B cell (primary cell): ENCODE measurements at regions of chr10 and their contacts with region 1.

Region 1: GRCh38 chr10:35336084-35336831 is at the start of gene CCNY:
- DNase-seq: peak; percentile 83
- ATAC-seq: peak; percentile 87
- H3K4me3 ChIP-seq: peak within 1 kb of the TSS; percentile 50 to 90 (median 74)
- H3K4me3 Mint-ChIP-seq: peak within 1 kb of the TSS; percentile 87
- H3K27ac ChIP-seq: peak within 1 kb of the TSS; percentile 43 to 77
- H3K27ac Mint-ChIP-seq: peak within 1 kb of the TSS; percentile 82
- H3K4me1 ChIP-seq: peaks cover 34% of the 10 kb centered on the region in 2 donors
- H3K4me1 Mint-ChIP-seq: peaks cover 56% of the 10 kb centered on the region
- H3K27me3 ChIP-seq: no peaks in the 10 kb centered on the region
- H3K27me3 Mint-ChIP-seq: no peaks in the 10 kb centered on the region
- CTCF ChIP-seq: no peak
- total RNA-seq, gene CCNY: 61.7 and 64.9 TPM in 2 replicates

Region 2: GRCh38 chr10:35090162-35090954 is 245.9 kb before region 1 on chr10 and contains the start of gene CUL2:
- CTCF ChIA-PET with region 1: no interaction called
- POLR2A ChIA-PET with region 1: no interaction called
- intact Hi-C with region 1: loop called (anchors 1 kb)
- DNase-seq: peak; percentile 98
- ATAC-seq: peak; percentile 95
- H3K4me3 ChIP-seq: peak within 1 kb of the TSS; percentile 62 to 92 (median 80)
- H3K4me3 Mint-ChIP-seq: peak within 1 kb of the TSS; percentile 89
- H3K27ac ChIP-seq: peak within 1 kb of the TSS; percentile 95 to 98
- H3K27ac Mint-ChIP-seq: peak within 1 kb of the TSS; percentile 95
- H3K4me1 ChIP-seq: peaks cover 29 to 31% of the 10 kb centered on the region in 2 donors
- H3K4me1 Mint-ChIP-seq: peaks cover 50% of the 10 kb centered on the region
- H3K27me3 ChIP-seq: no peaks in the 10 kb centered on the region
- H3K27me3 Mint-ChIP-seq: no peaks in the 10 kb centered on the region
- CTCF ChIP-seq: no peak
- total RNA-seq, gene CUL2: 36.9 and 41.9 TPM in 2 replicates

Region 3: GRCh38 chr10:35563261-35563891 is 227.1 kb after region 1 on chr10:
- CTCF ChIA-PET with region 1: interaction called, 3 read pairs
- POLR2A ChIA-PET with region 1: no interaction called
- intact Hi-C with region 1: loop called (anchors 1 kb)
- DNase-seq: peak; percentile 66
- ATAC-seq: peak; percentile 54
- H3K4me3 ChIP-seq: no peak overlapping the region
- H3K4me3 Mint-ChIP-seq: no peak overlapping the region
- H3K27ac ChIP-seq: no peak overlapping the region
- H3K27ac Mint-ChIP-seq: no peak overlapping the region
- H3K4me1 ChIP-seq: peaks cover 12 to 20% of the 10 kb centered on the region in 2 donors
- H3K4me1 Mint-ChIP-seq: peaks cover 19% of the 10 kb centered on the region
- H3K27me3 ChIP-seq: no peaks in the 10 kb centered on the region
- H3K27me3 Mint-ChIP-seq: no peaks in the 10 kb centered on the region
- CTCF ChIP-seq: peak; percentile 98

Region 4: DNA sequence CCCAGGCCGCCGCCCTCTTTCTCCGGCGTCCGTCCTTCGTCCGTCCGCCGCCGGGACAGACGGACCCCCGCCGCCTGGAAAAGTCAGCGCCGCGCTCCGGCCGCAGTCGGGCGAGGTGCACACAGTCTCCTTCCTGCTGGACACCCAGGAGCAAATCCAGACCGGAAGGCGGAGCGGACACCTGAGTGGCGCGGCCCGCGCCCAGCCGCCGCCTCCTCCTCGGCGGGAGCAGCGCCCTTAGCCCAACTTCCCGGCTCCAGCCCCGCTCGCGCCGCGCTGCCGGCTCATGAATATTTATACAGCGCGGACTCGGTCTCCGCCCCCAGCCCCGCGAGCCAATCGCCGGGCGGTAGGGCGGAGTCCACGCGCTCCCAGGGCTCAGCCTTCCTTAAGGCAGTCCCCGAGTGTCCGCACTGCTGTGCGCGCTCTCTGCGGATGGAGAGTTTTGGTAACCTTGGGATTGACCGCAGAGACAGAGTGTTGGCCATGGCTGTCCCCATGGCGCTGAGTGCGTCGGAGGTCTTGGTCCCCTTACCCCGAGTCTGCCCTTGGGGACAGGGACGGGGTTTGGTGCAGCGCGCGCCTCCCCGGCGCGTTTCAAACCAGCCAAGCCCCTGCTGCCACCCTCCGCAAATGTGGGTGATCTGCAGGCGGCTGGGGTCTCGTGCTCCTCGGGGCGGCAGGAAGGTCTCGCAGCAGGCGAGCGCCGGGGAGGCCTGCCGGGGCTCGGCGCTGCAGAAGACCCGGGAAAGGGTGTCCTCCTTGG is 306.0 kb after region 1 on chr10 and contains the start of gene FZD8:
- CTCF ChIA-PET with region 1: no interaction called
- POLR2A ChIA-PET with region 1: no interaction called
- intact Hi-C with region 1: loop called (anchors 5 kb)
- DNase-seq: peak; percentile 86
- ATAC-seq: peak; percentile 89
- H3K4me3 ChIP-seq: peak within 1 kb of the TSS; percentile 48 to 74 (median 63)
- H3K4me3 Mint-ChIP-seq: peak within 1 kb of the TSS; percentile 94
- H3K27ac ChIP-seq: no peak within 1 kb of the TSS
- H3K27ac Mint-ChIP-seq: peak within 1 kb of the TSS; percentile 47
- H3K4me1 ChIP-seq: peaks cover 22 to 29% of the 10 kb centered on the region in 2 donors
- H3K4me1 Mint-ChIP-seq: peaks cover 32% of the 10 kb centered on the region
- H3K27me3 ChIP-seq: peaks cover 0 to 43% (median 23%) of the 10 kb centered on the region in 4 experiments
- H3K27me3 Mint-ChIP-seq: peaks cover 35% of the 10 kb centered on the region
- CTCF ChIP-seq: no peak
- total RNA-seq, gene FZD8: 1.7 and 1.9 TPM in 2 replicates